Endothelial cell of umbilical vein (primary cell): ENCODE measurements at regions of chr4 and their contacts with region 1.

Region 1: DNA sequence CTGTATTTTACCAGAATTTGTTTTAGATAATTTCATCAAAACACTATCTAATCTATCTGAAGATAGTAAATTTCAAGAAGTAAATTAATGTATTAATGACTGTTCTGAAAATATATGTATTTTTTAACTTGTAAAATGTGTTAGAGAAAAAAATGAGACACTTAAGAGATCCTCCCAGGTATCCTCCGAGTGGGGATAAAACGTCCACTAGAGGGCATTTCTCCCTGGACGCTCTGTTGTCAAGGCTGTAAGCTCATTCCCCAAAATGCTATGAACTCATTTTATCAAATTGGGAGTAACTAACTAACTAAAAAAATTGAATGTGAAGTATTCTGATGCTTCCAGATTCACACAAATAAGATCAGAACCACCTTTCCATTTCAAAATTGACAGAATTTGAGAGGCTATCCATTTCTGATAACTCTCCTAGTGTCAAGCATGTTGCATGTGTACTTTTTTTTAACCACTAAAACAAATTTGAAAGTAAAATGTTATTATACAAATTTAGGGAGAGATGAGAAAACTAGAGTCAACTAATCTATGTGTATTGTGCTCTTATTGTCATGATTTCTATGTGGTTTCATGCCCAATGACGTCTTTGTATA is 337.3 kb upstream of the HS3ST1 start:
- DNase-seq: peak; percentile 75
- H3K4me3 ChIP-seq: no peak overlapping the region
- H3K27ac ChIP-seq: no peak overlapping the region
- H3K4me1 ChIP-seq: no peaks in the 10 kb centered on the region
- H3K27me3 ChIP-seq: no peaks in the 10 kb centered on the region
- CTCF ChIP-seq: peak; percentile 61 to 70
- POLR2A ChIP-seq: no peak

Region 2: DNA sequence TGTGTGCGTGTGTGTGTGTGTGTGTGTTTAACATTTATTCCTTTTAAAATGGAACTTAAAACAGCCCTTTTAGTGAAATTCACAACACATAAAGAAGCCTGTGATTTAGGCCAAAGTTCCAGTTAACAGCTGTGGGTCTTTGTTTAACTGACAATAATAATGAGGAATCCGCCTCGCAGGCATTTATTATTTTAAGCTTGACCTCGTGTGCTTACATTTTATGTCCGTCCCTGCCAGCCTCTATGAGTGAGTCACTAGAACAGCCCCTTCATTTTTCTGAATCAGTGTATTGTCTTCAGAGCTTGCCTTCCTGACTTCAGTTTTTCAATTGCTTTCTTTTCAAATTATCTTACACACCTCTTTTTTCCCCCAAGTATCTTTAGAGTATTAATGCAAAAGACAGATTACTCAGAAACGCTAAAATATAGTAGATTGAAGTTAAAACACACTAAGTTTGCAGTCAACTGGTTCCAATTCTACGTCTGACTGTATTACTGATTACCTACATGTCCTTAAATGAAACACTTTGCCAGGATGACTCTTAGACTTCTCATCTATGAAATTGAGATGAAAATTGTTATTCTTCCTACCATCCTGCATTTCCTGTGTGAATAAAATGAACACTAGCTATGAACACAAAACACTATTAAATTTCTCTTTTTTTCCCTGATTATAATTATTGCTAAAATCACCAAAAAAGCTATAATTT is 17.6 kb before region 1 on chr4:
- CTCF ChIA-PET with region 1: interaction called, 27 read pairs
- POLR2A ChIA-PET with region 1: no interaction called
- dilution Hi-C with region 1: no loop called
- intact Hi-C with region 1: no loop called
- DNase-seq: peak; percentile 96
- H3K4me3 ChIP-seq: peak overlapping the region in 1 of 3 experiments; percentile 48
- H3K27ac ChIP-seq: peak overlapping the region; percentile 85
- H3K4me1 ChIP-seq: peaks cover 48% of the 10 kb centered on the region
- H3K27me3 ChIP-seq: no peaks in the 10 kb centered on the region
- CTCF ChIP-seq: no peak
- POLR2A ChIP-seq: no peak

Region 3: GRCh38 chr4:11805842-11806241 is 39.9 kb after region 1 on chr4:
- CTCF ChIA-PET with region 1: interaction called, 14 read pairs
- POLR2A ChIA-PET with region 1: no interaction called
- dilution Hi-C with region 1: no loop called
- intact Hi-C with region 1: loop called (anchors 2 kb)
- DNase-seq: peak; percentile 81
- H3K4me3 ChIP-seq: no peak overlapping the region
- H3K27ac ChIP-seq: peak overlapping the region; percentile 45
- H3K4me1 ChIP-seq: peaks cover 21% of the 10 kb centered on the region
- H3K27me3 ChIP-seq: no peaks in the 10 kb centered on the region
- CTCF ChIP-seq: peak; percentile 58 to 65
- POLR2A ChIP-seq: no peak

Region 4: DNA sequence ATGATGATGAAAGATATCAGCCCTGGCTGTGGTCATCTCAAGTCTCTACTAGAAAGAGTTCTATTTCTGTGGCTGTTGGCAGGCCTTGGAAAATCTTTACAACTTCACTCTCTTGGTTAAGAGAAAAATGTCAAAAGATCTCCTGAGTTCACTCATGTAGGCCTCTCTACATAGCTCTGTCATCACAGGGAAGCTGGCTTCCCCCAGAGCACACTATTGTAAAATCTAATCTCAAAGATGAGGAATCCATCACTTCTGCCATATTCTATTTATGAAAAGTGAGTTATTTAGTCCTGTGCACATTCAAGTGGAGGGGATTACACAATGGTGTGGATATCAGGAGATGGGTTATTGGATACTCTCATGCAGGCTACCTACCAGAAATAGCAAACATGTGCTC is 51.1 kb after region 1 on chr4:
- CTCF ChIA-PET with region 1: no interaction called
- POLR2A ChIA-PET with region 1: no interaction called
- dilution Hi-C with region 1: no loop called
- intact Hi-C with region 1: no loop called
- DNase-seq: no peak
- H3K4me3 ChIP-seq: no peak overlapping the region
- H3K27ac ChIP-seq: no peak overlapping the region
- H3K4me1 ChIP-seq: no peaks in the 10 kb centered on the region
- H3K27me3 ChIP-seq: no peaks in the 10 kb centered on the region
- CTCF ChIP-seq: no peak
- POLR2A ChIP-seq: no peak